ENCODE measurements at regions of chr3 and their contacts with region 1.

Region 1: DNA sequence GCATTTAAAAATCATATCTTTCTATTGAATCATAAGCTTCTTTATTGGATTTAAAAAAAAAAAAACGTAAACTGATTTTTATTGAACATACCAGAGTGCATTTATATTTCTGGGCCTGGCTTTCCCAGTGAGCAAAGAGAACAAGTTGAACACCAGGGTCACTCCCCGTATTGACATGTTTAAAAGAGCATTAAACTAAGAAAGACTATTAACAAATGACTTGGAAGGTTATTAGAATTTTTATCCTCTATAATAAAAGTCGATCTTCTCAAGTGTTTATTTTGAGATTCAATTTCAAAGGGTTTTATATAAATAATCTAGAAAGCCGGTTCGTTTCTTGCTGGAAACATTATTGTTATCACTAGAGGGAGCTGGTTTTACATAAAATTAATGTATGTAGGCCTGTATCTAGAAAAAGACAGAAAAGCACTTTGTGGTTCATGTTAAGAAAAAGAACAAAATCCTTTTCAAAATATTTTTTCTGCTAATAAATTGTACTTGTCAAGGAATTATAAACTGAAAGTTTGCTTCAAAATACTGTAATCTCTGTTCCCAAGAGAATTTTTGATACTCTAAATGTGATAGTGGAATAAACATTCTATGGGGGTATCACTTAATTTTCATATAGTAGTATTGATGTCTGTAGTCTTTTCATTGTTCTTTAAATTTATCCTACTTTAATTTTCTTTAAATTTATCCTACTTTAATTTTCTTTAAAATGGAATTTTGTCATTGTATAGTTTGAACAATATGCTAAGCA is 321.8 kb upstream of the MME start:
- DNase-seq: peak; percentile 65
- H3K4me3 ChIP-seq: no peak overlapping the region
- H3K27ac ChIP-seq: no peak overlapping the region
- H3K4me1 ChIP-seq: no peaks in the 10 kb centered on the region
- CTCF ChIP-seq: peak; percentile 89

Region 2: DNA sequence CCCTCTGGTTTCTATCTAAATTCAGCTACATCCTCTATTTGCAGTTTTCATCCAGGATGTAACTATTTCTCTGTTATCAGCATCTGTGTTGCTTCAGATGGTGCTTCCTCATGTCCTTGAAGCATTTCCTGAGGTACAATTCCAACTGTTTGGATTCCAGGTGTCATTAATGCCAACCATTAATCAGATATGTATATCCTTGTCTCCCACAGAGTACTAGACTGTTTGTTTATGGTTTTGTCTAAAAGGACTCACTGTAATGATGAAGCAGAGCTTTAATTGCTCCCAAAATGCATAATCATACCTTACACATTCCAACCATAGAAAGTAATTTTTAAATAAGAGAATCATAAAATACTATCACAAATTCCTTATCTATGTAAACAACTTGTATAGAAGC is 33.3 kb after region 1 on chr3:
- CTCF ChIA-PET with region 1: no interaction called
- POLR2A ChIA-PET with region 1: no interaction called
- intact Hi-C with region 1: no loop called
- DNase-seq: no peak
- H3K4me3 ChIP-seq: no peak overlapping the region
- H3K27ac ChIP-seq: no peak overlapping the region
- H3K4me1 ChIP-seq: no peaks in the 10 kb centered on the region
- CTCF ChIP-seq: no peak

Region 3: DNA sequence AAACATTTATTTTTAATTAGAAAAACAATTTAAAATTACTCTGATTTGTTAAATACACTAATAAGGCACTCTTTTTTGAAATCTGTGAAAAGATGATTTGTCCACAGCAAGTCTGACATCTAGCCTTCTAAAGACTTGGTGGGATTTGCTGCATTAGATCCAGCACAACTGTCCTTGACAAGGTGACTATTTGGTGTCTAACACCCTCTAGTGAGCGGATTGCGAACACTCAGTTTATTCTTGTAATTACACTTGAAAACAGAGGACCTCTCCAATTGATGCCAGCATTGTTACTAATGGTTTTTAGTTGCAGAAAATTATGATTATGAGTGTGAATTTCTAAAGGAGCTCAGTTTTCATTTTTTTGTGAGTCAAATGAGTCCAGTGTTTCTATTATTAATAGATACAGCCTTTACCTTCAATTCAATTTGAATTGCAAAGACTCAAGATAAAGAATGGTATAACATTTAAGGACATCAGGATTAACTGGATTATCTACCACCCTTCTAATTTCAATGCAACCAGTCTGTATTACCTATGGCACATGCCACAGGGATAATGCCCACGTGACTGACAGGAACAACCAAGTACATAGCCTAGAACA is 564.9 kb after region 1 on chr3:
- CTCF ChIA-PET with region 1: no interaction called
- POLR2A ChIA-PET with region 1: interaction called, 6 read pairs
- intact Hi-C with region 1: loop called (anchors 1 kb)
- DNase-seq: peak; percentile 89
- H3K4me3 ChIP-seq: no peak overlapping the region
- H3K27ac ChIP-seq: no peak overlapping the region
- H3K4me1 ChIP-seq: peaks cover 3% of the 10 kb centered on the region
- CTCF ChIP-seq: peak; percentile 97

Region 4: DNA sequence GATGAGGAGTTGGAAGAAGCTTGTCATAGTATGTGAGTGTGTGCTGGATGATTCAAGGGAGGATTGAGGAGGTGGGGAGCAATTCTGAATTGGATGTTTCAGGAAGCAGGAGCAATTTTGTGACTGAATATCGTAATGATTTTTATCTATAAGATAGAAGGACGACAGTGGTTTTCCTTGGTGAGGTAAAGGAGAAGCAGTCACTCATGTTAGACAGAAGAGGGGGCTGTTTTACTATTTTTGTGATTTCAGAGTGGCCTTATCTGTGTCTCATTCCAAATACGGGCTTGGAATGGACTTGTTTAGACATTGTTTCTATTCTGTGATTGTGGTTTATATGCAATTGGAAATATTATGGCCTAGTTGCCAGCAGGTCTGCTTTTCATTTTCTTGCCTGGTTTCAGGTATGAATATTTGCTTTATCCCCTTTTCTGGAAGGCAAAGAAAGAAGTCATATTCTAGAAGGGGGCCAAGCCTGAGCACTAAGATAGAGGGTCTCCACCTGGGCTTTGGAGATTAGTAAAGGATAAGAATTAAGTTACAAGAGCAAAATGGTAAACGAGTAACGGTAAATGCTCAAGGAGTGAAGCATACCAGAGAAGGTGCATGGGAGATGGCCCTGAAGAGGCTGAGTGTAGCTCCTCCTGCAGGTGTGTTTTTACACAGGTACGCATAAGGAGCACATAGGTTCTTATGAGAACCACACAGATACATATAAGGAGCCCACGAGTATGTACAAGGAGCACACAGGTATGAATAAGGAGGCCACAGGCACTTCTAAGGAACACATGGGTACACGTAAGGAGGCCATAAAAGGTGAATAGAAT is 1237.4 kb after region 1 on chr3:
- CTCF ChIA-PET with region 1: no interaction called
- POLR2A ChIA-PET with region 1: interaction called, 10 read pairs
- intact Hi-C with region 1: no loop called
- DNase-seq: peak; percentile 22
- H3K4me3 ChIP-seq: no peak overlapping the region
- H3K27ac ChIP-seq: no peak overlapping the region
- H3K4me1 ChIP-seq: no peaks in the 10 kb centered on the region
- CTCF ChIP-seq: peak; percentile 68

Measured in OCI-LY7 (cell line).